BJ (cell line): ENCODE measurements at regions of chr3 and their contacts with region 1.

Region 1: DNA sequence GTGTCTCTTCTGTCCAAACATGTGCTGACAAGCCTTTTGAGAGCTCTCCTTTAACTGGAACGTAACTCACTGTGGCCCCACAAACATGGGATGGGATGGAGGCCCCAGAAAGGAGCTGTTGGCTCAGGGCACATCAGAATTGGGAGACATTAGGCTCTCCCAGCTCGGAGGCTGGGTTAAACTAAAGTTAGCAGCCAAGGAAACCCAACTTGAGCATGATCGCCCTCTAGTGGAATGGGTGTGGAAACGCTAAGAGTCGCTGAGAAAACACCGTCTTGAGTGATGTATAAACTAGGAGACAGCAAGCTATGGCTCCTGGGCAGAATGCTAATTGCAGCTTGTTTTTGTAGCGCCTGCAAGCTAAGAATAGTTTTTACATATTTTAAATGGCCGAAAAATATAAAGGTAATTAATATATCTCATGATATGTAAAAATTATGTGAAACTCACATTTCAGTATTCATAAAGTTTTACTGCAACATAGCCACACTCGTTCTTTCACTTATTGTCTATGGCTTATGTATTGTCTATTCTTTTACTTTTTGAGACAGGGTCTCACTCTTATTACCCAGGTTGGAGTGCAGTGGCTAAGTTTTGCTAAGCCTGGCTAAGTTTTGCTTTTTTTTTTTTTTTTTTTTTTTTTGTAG is 138.8 kb upstream of the HACD2 start:
- DNase-seq: no peak
- H3K4me3 ChIP-seq: no peak overlapping the region
- H3K27me3 ChIP-seq: no peaks in the 10 kb centered on the region
- CTCF ChIP-seq: peak; percentile 84

Region 2: DNA sequence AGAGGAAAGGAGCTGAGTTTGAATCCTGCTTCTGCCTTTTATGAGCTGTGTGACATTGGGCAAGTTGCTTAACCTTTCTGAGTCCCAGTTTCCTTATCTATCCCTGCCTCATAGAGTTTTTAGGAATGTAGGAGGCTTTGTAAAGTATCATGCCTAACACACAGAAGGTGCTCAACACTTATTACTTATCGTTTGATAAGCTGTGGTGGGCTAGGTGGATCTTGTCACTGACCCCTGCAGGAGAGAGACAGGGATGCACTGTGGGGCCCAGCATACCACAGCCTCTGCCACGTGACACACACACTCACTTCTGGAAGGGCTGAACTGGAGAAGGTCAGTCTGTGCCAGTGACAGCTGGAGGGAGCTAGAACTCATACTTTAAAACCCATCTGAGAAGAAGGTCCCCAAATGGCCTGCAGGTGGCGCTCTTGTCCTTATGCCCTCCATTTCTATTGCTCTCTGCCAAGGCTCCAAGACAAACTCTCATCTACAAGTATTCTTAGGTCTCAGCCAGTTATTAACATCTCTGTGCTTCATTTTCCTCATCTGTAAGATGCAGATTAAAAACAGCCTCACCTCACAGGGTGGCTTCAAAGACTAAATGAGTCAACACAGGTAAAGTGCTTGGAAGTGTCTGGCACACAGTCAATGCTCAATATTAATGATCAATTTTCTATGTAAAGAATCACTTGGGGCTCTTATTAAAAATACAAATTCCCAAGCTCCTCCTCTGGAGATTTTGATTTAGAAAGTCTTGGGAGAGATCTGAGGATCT is 81.3 kb before region 1 on chr3:
- CTCF ChIA-PET with region 1: interaction called, 10 read pairs
- POLR2A ChIA-PET with region 1: no interaction called
- DNase-seq: peak; percentile 59
- H3K4me3 ChIP-seq: no peak overlapping the region
- H3K27me3 ChIP-seq: no peaks in the 10 kb centered on the region
- CTCF ChIP-seq: peak; percentile 89

Region 3: GRCh38 chr3:123712077-123712860 is 11.4 kb before region 1 on chr3:
- CTCF ChIA-PET with region 1: interaction called, 17 read pairs
- POLR2A ChIA-PET with region 1: no interaction called
- DNase-seq: no peak
- H3K4me3 ChIP-seq: no peak overlapping the region
- H3K27me3 ChIP-seq: no peaks in the 10 kb centered on the region
- CTCF ChIP-seq: no peak

Region 4: DNA sequence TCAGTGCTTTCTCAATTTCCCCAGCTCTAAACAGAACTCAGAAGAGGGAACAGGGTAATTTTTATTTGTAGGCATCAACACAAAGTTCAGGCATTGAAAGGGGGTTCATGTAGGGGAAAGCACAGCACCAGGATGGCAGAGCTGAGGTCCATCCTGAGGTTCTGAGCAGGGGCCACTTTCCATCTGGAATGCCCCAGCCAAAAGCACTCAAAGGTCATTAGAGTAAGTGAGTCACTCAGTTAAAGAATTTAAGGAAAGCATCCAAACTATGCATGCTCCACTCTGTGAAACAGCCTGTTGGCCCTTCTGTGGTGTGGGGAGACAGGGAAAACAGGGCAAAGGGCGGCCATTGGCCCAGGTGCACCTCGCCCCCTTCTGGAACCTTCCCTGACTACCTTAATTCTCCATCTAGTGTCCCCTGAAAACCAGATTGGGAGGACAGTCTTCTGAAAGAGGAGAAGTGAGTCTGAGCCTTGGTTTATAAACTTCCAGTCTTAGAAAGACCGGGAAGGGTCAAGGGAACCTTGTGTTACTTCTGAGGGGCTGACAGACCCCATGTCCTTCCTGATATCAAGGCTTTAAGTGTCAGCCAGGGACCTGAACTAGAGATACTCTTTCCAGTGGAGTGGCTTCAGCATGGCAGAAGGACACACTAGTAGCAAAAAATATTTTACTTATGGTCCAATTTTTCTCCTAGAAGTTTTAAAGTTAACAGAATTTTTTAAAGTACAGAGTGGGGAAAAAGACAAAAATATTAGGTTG is 27.2 kb after region 1 on chr3:
- CTCF ChIA-PET with region 1: interaction called, 10 read pairs
- POLR2A ChIA-PET with region 1: no interaction called
- DNase-seq: peak; percentile 84
- H3K4me3 ChIP-seq: no peak overlapping the region
- H3K27me3 ChIP-seq: no peaks in the 10 kb centered on the region
- CTCF ChIP-seq: peak; percentile 32; the same call in 1 of the 2 replicates